Activated CD4-positive, alpha-beta T cell treated with anti-CD3 and anti-CD28 coated beads, Interleukin-2, amount 10 ng/mL, durations not matched to agents 24 days and 14 days (primary cell): ENCODE measurements at regions of chr3 and their contacts with region 1.

Region 1: GRCh38 chr3:56862352-56863074 is 60.8 kb upstream of the ARHGEF3 start:
- DNase-seq: no peak
- H3K4me3 Mint-ChIP-seq: peak overlapping the region; percentile 45
- H3K27ac Mint-ChIP-seq: peak overlapping the region; percentile 79
- H3K4me1 Mint-ChIP-seq: peaks cover 59% of the 10 kb centered on the region
- H3K27me3 Mint-ChIP-seq: no peaks in the 10 kb centered on the region

Region 2: GRCh38 chr3:56783644-56784447 is 78.7 kb before region 1 on chr3:
- intact Hi-C with region 1: loop called (anchors 1 kb)
- DNase-seq: peak; percentile 92
- H3K4me3 Mint-ChIP-seq: peak overlapping the region; percentile 75
- H3K27ac Mint-ChIP-seq: peak overlapping the region; percentile 95
- H3K4me1 Mint-ChIP-seq: peaks cover 87% of the 10 kb centered on the region
- H3K27me3 Mint-ChIP-seq: no peaks in the 10 kb centered on the region

Region 3: GRCh38 chr3:56795097-56795828 is 67.2 kb before region 1 on chr3:
- intact Hi-C with region 1: no loop called
- DNase-seq: no peak
- H3K4me3 Mint-ChIP-seq: peak overlapping the region; percentile 97
- H3K27ac Mint-ChIP-seq: peak overlapping the region; percentile 78
- H3K4me1 Mint-ChIP-seq: peaks cover 61% of the 10 kb centered on the region
- H3K27me3 Mint-ChIP-seq: no peaks in the 10 kb centered on the region

Region 4: GRCh38 chr3:56878074-56878473 is 15.6 kb after region 1 on chr3:
- intact Hi-C with region 1: loop called (anchors 1 kb)
- DNase-seq: peak; percentile 80
- H3K4me3 Mint-ChIP-seq: peak overlapping the region; percentile 76
- H3K27ac Mint-ChIP-seq: peak overlapping the region; percentile 96
- H3K4me1 Mint-ChIP-seq: peaks cover 78% of the 10 kb centered on the region
- H3K27me3 Mint-ChIP-seq: no peaks in the 10 kb centered on the region

Region 5: GRCh38 chr3:56894881-56895431 is 32.4 kb after region 1 on chr3:
- intact Hi-C with region 1: loop called (anchors 2 kb)
- DNase-seq: peak; percentile 70
- H3K4me3 Mint-ChIP-seq: no peak overlapping the region
- H3K27ac Mint-ChIP-seq: peak overlapping the region; percentile 45
- H3K4me1 Mint-ChIP-seq: peaks cover 43% of the 10 kb centered on the region
- H3K27me3 Mint-ChIP-seq: no peaks in the 10 kb centered on the region